A673 (cell line): ENCODE measurements at regions of chr6 and their contacts with region 1.

Region 1: DNA sequence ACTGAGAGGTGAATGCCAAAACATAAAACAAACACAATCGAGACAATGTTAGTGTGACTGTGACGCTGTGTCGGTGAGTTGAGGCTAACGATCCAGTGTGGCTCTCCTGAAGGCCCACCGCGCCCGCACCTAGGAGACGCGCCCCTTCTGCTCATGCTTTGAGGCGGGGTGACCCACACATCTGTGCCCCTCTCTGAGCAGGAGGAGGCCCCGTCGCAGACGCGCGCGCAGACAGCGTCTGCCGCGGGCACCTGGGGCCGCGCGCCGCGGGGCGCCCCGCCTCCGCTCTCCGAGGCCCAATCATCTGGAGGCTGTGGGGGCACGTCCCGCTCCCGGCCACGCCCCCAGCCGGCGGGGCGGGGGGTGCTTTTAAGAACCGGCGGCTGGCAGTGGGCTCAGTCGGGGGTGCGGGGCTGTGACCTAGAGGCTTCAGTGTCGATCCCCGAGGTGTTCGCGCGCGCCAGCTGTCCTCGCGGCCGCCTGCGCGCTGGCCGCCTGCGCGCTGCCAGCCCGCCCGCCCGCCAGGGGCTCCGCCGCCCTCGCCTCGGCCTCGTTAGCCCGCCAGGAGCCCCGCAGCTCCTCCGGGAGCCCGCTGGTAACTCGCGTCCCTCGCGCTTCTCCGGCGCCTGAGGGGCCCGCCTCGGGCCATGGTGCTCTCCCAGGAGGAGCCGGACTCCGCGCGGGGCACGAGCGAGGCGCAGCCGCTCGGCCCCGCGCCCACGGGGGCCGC is at the start of gene SLC16A10:
- DNase-seq: peak; percentile 82
- H3K4me3 ChIP-seq: peak within 1 kb of the TSS; percentile 69
- H3K27ac ChIP-seq: peak within 1 kb of the TSS; percentile 58
- H3K4me1 ChIP-seq: peaks cover 7% of the 10 kb centered on the region
- H3K27me3 ChIP-seq: peaks cover 18% of the 10 kb centered on the region
- CTCF ChIP-seq: no peak
- total RNA-seq, gene SLC16A10: 6.0 and 7.9 TPM in 2 replicates

Region 2: GRCh38 chr6:110738899-110739365 is 348.3 kb before region 1 on chr6:
- CTCF ChIA-PET with region 1: no interaction called
- POLR2A ChIA-PET with region 1: no interaction called
- intact Hi-C with region 1: no loop called
- DNase-seq: no peak
- H3K4me3 ChIP-seq: no peak overlapping the region
- H3K27ac ChIP-seq: no peak overlapping the region
- H3K4me1 ChIP-seq: no peaks in the 10 kb centered on the region
- H3K27me3 ChIP-seq: no peaks in the 10 kb centered on the region
- CTCF ChIP-seq: no peak

Region 3: DNA sequence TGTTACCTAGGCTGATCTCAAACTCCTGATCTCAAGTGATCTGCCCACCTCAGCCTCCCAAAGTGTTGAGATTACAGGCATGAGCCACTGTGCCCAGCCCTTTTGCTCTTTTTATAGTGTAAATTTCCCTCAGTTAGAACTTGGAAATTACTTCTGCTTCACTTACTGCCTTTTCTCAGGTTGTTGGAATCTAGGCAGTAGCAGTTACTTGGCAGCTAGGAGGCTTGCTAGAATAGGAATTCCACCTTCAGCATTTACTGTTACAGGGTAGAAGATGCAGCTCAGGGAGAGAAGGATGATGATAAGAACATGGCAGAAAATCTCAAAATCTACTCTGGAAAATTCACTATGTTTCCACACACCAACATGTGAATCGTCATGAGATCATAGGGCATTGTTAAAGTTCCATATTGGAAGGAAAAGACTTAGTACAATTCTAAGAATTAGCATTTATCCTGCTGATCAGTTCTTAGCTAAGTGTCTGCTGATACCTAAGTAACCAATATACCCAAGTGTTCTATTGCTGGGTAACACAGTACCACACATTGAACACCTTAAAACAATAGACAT is 182.2 kb after region 1 on chr6:
- CTCF ChIA-PET with region 1: interaction called, 10 read pairs
- POLR2A ChIA-PET with region 1: no interaction called
- intact Hi-C with region 1: no loop called
- DNase-seq: no peak
- H3K4me3 ChIP-seq: no peak overlapping the region
- H3K27ac ChIP-seq: no peak overlapping the region
- H3K4me1 ChIP-seq: no peaks in the 10 kb centered on the region
- H3K27me3 ChIP-seq: no peaks in the 10 kb centered on the region
- CTCF ChIP-seq: no peak